PC-9 (cell line): ENCODE measurements at regions of chr4 and their contacts with region 1.

Region 1: GRCh38 chr4:105440890-105441289 is 33.0 kb downstream of the PPA2 start:
- DNase-seq: no peak
- H3K4me3 ChIP-seq: no peak overlapping the region
- H3K27ac ChIP-seq: no peak overlapping the region
- H3K4me1 ChIP-seq: no peaks in the 10 kb centered on the region
- H3K27me3 ChIP-seq: no peaks in the 10 kb centered on the region
- CTCF ChIP-seq: no peak

Region 2: GRCh38 chr4:105002278-105002677 is 438.6 kb before region 1 on chr4:
- CTCF ChIA-PET with region 1: no interaction called
- POLR2A ChIA-PET with region 1: interaction called, 10 read pairs
- intact Hi-C with region 1: no loop called
- DNase-seq: no peak
- H3K4me3 ChIP-seq: no peak overlapping the region
- H3K27ac ChIP-seq: no peak overlapping the region
- H3K4me1 ChIP-seq: no peaks in the 10 kb centered on the region
- H3K27me3 ChIP-seq: no peaks in the 10 kb centered on the region
- CTCF ChIP-seq: no peak

Region 3: GRCh38 chr4:105102016-105102415 is 338.9 kb before region 1 on chr4:
- CTCF ChIA-PET with region 1: no interaction called
- POLR2A ChIA-PET with region 1: no interaction called
- intact Hi-C with region 1: no loop called
- DNase-seq: no peak
- H3K4me3 ChIP-seq: no peak overlapping the region
- H3K27ac ChIP-seq: no peak overlapping the region
- H3K4me1 ChIP-seq: no peaks in the 10 kb centered on the region
- H3K27me3 ChIP-seq: no peaks in the 10 kb centered on the region
- CTCF ChIP-seq: no peak

Region 4: GRCh38 chr4:105361053-105361452 is 79.8 kb before region 1 on chr4:
- CTCF ChIA-PET with region 1: no interaction called
- POLR2A ChIA-PET with region 1: no interaction called
- intact Hi-C with region 1: no loop called
- DNase-seq: no peak
- H3K4me3 ChIP-seq: no peak overlapping the region
- H3K27ac ChIP-seq: no peak overlapping the region
- H3K4me1 ChIP-seq: no peaks in the 10 kb centered on the region
- H3K27me3 ChIP-seq: no peaks in the 10 kb centered on the region
- CTCF ChIP-seq: no peak